Mammary epithelial cell (primary cell): ENCODE measurements at regions of chr15 and their contacts with region 1.

Region 1: GRCh38 chr15:77821188-77821958 is 188.7 kb upstream of the LINGO1 start:
- DNase-seq: peak; percentile 36
- H3K4me3 ChIP-seq: no peak overlapping the region
- H3K27ac ChIP-seq: no peak overlapping the region
- H3K4me1 ChIP-seq: peaks cover 13% of the 10 kb centered on the region
- H3K27me3 ChIP-seq: peaks cover 33% of the 10 kb centered on the region
- CTCF ChIP-seq: peak; percentile 79 to 91

Region 2: GRCh38 chr15:77118882-77119321 is 702.5 kb before region 1 on chr15:
- CTCF ChIA-PET with region 1: no interaction called
- dilution Hi-C with region 1: no loop called
- in situ Hi-C with region 1: loop called in 1 of 2 experiments (anchors 25 kb)
- intact Hi-C with region 1: loop called (anchors 2 kb)
- DNase-seq: peak; percentile 40
- H3K4me3 ChIP-seq: no peak overlapping the region
- H3K27ac ChIP-seq: no peak overlapping the region
- H3K4me1 ChIP-seq: no peaks in the 10 kb centered on the region
- H3K27me3 ChIP-seq: no peaks in the 10 kb centered on the region
- CTCF ChIP-seq: peak; percentile 81 to 83

Region 3: GRCh38 chr15:77543159-77543882 is 278.1 kb before region 1 on chr15:
- CTCF ChIA-PET with region 1: interaction called, 5 read pairs
- dilution Hi-C with region 1: no loop called
- in situ Hi-C with region 1: no loop called
- intact Hi-C with region 1: loop called (anchors 1 kb)
- DNase-seq: peak; percentile 77
- H3K4me3 ChIP-seq: peak overlapping the region in 2 of 3 experiments; percentile 40 to 43
- H3K27ac ChIP-seq: peak overlapping the region; percentile 9
- H3K4me1 ChIP-seq: peaks cover 27% of the 10 kb centered on the region
- H3K27me3 ChIP-seq: no peaks in the 10 kb centered on the region
- CTCF ChIP-seq: peak; percentile 82 to 97

Region 4: GRCh38 chr15:77633134-77633912 is 188.1 kb before region 1 on chr15:
- CTCF ChIA-PET with region 1: interaction called, 3 read pairs
- dilution Hi-C with region 1: no loop called
- in situ Hi-C with region 1: loop called in 1 of 2 experiments (anchors 25 kb)
- intact Hi-C with region 1: loop called (anchors 1 kb)
- DNase-seq: peak; percentile 70
- H3K4me3 ChIP-seq: peak overlapping the region; percentile 7 to 43 (median 38)
- H3K27ac ChIP-seq: no peak overlapping the region
- H3K4me1 ChIP-seq: peaks cover 5% of the 10 kb centered on the region
- H3K27me3 ChIP-seq: peaks cover 9% of the 10 kb centered on the region
- CTCF ChIP-seq: peak; percentile 99 to 100

Region 5: GRCh38 chr15:77650265-77650664 is 171.1 kb before region 1 on chr15:
- CTCF ChIA-PET with region 1: no interaction called
- dilution Hi-C with region 1: no loop called
- in situ Hi-C with region 1: loop called in 1 of 2 experiments (anchors 25 kb)
- intact Hi-C with region 1: loop called (anchors 1 kb)
- DNase-seq: no peak
- H3K4me3 ChIP-seq: no peak overlapping the region
- H3K27ac ChIP-seq: no peak overlapping the region
- H3K4me1 ChIP-seq: no peaks in the 10 kb centered on the region
- H3K27me3 ChIP-seq: peaks cover 6% of the 10 kb centered on the region
- CTCF ChIP-seq: peak in 1 of 2 donors; percentile 9

Region 6: GRCh38 chr15:77659350-77660321 is 161.7 kb before region 1 on chr15:
- CTCF ChIA-PET with region 1: no interaction called
- dilution Hi-C with region 1: no loop called
- in situ Hi-C with region 1: no loop called
- intact Hi-C with region 1: loop called (anchors 2 kb)
- DNase-seq: peak; percentile 21
- H3K4me3 ChIP-seq: no peak overlapping the region
- H3K27ac ChIP-seq: no peak overlapping the region
- H3K4me1 ChIP-seq: no peaks in the 10 kb centered on the region
- H3K27me3 ChIP-seq: peaks cover 4% of the 10 kb centered on the region
- CTCF ChIP-seq: peak in 1 of 2 donors; percentile 28